Heart left ventricle (tissue), 16 donors: ENCODE measurements at regions of chrX and their contacts with region 1.

Region 1: DNA sequence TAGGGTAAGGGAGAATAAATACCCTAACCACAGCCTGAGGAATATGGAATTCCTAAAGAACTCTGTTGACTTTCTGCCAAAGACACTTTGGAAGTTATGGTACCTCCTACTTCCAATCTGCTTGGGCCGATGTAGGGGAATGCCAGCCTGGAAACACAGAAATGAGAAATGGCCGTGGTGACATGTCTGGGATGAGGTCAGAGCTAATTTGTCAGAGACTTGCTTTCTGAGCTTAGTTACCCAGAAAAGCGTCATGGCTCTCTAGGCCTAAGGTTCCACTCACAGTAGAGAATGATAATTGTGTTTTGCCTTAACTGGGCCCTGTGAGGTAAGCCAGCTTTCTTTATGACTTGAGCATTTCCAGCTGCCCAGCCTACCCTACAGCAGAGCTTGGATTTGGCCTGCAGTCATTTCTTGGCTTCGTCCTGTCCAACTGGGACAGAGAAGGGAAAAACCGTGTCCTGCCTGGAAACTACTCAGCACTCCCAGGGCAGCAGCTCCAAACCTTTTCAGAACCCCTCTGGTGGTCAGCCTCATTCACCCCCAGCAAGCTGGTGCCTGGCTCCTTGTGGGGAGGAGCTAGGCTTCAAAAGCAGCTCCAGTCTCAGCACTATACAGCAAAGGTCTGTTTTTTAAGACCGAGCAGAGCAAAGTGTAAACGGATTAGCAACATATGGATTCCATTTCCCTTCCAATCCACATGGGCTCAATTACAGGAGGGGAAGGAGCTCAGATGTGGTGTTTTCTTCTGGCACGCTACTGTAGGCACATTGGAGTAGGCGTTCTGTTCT is 92.3 kb downstream of the RLIM start:
- DNase-seq: peak in 4 of 5 donors; percentile 16 to 44 (median 28)
- ATAC-seq: peak in 3 of 4 donors; percentile 67 to 79 (median 69)
- H3K4me3 ChIP-seq: no peak overlapping the region
- H3K27ac ChIP-seq: peak overlapping the region in 5 of 12 donors; percentile 4 to 46 (median 37)
- H3K4me1 ChIP-seq: peaks cover 0 to 6% (median 1%) of the 10 kb centered on the region in 12 donors
- H3K27me3 ChIP-seq: peaks cover 0 to 5% (median 0%) of the 10 kb centered on the region in 9 donors
- CTCF ChIP-seq: no peak
- POLR2A ChIP-seq: no peak

Region 2: GRCh38 chrX:73903941-73904340 is 618.2 kb before region 1 on chrX:
- intact Hi-C with region 1: no loop called
- DNase-seq: no peak
- ATAC-seq: no peak
- H3K4me3 ChIP-seq: no peak overlapping the region
- H3K27ac ChIP-seq: no peak overlapping the region
- H3K4me1 ChIP-seq: no peaks in the 10 kb centered on the region
- H3K27me3 ChIP-seq: peaks cover 0 to 6% (median 0%) of the 10 kb centered on the region in 9 donors
- CTCF ChIP-seq: no peak
- POLR2A ChIP-seq: no peak

Region 3: GRCh38 chrX:74579597-74580198 is 57.5 kb after region 1 on chrX:
- intact Hi-C with region 1: loop called in 1 of 10 experiments (anchors 10 kb)
- DNase-seq: no peak
- ATAC-seq: no peak
- H3K4me3 ChIP-seq: no peak overlapping the region
- H3K27ac ChIP-seq: no peak overlapping the region
- H3K4me1 ChIP-seq: no peaks in the 10 kb centered on the region
- H3K27me3 ChIP-seq: no peaks in the 10 kb centered on the region
- CTCF ChIP-seq: no peak
- POLR2A ChIP-seq: no peak